CD14-positive monocyte (primary cell): ENCODE measurements at regions of chr1 and their contacts with region 1.

Region 1: DNA sequence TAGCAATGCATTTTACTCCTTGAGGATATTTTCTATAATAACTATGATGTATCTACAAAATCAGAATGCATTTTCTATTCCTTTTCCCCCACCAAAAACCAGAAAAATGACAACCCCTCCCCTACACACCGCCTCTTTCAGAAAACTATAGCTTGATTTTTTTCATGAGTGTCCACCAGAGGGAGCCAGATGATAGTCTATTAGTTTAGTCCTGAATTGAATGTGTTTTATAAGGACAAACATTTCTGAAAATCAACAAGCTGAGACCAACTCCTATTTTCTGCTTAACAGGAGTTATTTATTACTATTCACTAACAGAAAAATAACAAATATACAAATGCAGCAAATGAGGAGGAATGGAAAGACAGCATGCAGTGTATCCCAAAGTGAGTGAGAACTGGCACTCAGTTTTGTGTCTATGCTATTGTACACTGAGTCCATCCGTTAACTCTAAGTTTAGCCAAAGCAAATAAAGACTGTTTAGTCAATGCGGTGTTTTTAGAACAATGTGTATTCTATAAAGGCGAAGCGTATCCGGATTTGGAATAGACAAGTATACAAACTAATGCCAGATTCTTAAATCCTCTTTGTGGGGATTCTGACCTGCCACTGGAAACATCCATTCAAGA is 182.6 kb downstream of the VAV3 start:
- DNase-seq: peak; percentile 42 to 67 (median 53)
- H3K4me3 ChIP-seq: no peak overlapping the region
- H3K4me3 Mint-ChIP-seq: no peak overlapping the region
- H3K27ac ChIP-seq: no peak overlapping the region
- H3K27ac Mint-ChIP-seq: no peak overlapping the region
- H3K4me1 ChIP-seq: peaks cover 22 to 23% of the 10 kb centered on the region in 2 donors
- H3K4me1 Mint-ChIP-seq: peaks cover 27% of the 10 kb centered on the region
- H3K27me3 ChIP-seq: no peaks in the 10 kb centered on the region
- H3K27me3 Mint-ChIP-seq: peaks cover 0 to 1% (median 0%) of the 10 kb centered on the region in 3 donors
- CTCF ChIP-seq: peak; percentile 85

Region 2: DNA sequence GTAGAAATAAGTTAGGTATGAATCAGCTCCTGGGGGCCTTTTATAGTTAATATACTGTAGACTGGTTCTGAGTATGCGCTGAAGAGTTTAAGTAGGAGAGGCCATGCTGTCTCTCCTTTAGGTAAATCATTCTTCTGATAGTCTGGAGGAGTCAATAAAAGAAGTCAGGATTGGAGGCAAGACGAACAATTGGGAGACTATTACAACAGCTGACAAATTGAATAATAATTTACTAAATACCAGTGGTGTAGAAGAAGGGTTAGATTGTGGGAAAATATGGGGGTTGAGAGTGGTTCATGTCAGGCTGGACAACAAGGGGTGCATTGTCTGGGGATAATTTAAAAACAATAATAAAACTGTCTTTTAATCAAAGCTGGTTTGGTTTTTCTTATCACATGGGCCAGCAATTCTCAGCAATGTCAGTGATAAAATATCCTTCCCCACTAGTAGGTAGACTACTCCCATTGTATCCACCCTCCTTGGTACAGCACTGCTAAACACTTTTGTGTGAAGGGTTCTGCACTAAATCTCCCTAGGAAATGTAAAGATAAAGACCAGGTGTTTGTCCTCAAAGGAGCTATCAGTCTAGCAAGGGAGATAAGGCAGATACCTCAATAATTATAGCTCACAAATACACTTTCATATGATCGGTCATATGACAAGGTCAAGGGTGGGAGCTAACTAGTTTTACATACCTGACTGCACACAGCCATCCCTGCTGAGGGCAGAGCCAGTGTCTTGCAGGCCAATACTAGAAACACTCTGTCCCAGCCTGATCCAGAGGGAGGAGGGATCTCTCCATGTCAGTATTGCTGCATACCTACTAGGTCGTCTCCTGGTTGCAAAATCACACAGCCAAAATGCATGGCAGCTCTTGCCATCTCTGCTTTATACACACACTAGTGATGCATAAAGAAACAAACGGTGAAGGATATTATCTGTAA is 117.1 kb before region 1 on chr1:
- intact Hi-C with region 1: no loop called
- DNase-seq: no peak
- H3K4me3 ChIP-seq: no peak overlapping the region
- H3K4me3 Mint-ChIP-seq: no peak overlapping the region
- H3K27ac ChIP-seq: no peak overlapping the region
- H3K27ac Mint-ChIP-seq: no peak overlapping the region
- H3K4me1 ChIP-seq: no peaks in the 10 kb centered on the region
- H3K4me1 Mint-ChIP-seq: no peaks in the 10 kb centered on the region
- H3K27me3 ChIP-seq: no peaks in the 10 kb centered on the region
- H3K27me3 Mint-ChIP-seq: no peaks in the 10 kb centered on the region
- CTCF ChIP-seq: no peak

Region 3: DNA sequence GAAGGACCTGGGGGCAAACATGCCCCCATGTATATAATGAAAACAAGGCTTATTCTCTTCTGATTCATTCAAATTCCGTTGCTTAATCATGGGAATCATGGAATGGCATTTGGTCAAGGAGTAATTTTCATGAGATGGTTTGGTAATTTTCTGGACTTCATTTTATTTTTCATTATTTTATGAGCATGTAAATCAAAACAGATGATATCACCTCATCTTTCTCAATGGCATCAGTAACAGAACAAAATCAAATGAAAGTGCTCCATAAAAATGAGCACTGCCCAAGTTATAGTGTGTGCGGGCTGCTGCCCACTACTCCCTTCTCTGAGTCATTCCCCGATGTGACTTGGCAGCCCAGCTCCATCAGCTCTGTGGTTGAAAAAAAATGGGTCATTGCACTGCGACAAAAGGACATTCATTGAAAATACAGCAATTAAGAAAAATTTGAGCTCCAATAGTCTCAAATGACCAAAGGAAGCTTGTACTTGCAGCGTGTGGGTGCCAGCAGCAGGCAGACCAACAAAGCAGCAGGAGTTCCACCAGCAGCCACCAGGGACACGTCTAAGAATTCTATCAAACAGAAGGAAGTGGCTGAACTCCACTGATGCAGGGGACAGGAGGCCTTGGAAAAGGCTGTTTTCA is 267.0 kb after region 1 on chr1:
- intact Hi-C with region 1: loop called in 1 of 2 experiments (anchors 10 kb)
- DNase-seq: peak; percentile 59 to 77 (median 66)
- H3K4me3 ChIP-seq: peak overlapping the region in 1 of 3 experiments; percentile 70
- H3K4me3 Mint-ChIP-seq: no peak overlapping the region
- H3K27ac ChIP-seq: peak overlapping the region; percentile 86 to 91
- H3K27ac Mint-ChIP-seq: peak overlapping the region in 1 of 7 donors; percentile 15
- H3K4me1 ChIP-seq: peaks cover 66 to 70% of the 10 kb centered on the region in 2 donors
- H3K4me1 Mint-ChIP-seq: peaks cover 54% of the 10 kb centered on the region
- H3K27me3 ChIP-seq: no peaks in the 10 kb centered on the region
- H3K27me3 Mint-ChIP-seq: peaks cover 0 to 2% (median 2%) of the 10 kb centered on the region in 3 donors
- CTCF ChIP-seq: peak; percentile 67

Region 4: DNA sequence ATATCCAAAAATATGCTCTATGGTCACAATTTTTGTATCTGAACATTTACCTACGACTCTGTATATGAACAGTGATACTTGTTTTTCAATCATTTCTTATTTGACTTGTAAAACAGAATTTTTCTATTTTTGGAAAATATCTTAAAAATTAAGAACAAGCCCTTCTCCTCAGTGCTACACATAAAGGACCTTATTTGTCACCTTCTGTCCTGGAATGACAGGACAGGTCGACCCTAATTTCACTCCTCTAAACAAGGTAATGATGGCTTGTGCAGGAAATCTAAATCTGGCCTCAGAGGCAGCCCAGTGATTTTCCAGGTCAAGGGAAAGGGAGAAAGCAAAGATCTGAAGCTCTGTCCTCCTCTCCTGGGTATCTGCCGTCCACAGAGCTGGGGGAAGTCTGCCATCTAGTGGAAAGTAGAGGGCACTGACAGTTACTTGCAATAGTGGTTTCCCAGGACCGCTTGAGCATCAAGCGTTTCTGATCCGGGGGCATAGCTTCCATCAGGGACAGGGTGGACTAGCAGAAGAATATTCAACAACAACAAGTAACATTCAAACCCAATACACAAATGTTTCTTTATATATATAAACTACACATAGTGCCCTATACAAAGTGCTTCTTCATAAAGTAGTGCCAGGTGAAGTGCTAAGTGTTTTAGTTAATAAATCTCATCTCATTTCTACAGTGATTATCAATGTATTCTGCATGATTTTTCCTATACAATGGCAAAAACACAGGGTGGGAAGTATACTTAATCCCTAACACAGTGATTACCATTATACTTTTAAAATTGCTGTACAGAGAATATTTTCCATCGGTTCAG is 343.2 kb after region 1 on chr1:
- intact Hi-C with region 1: loop called (anchors 2 kb)
- DNase-seq: peak; percentile 63 to 75 (median 65)
- H3K4me3 ChIP-seq: no peak overlapping the region
- H3K4me3 Mint-ChIP-seq: no peak overlapping the region
- H3K27ac ChIP-seq: no peak overlapping the region
- H3K27ac Mint-ChIP-seq: peak overlapping the region in 2 of 7 donors; percentile 15 to 71
- H3K4me1 ChIP-seq: peaks cover 9 to 14% of the 10 kb centered on the region in 2 donors
- H3K4me1 Mint-ChIP-seq: peaks cover 22% of the 10 kb centered on the region
- H3K27me3 ChIP-seq: no peaks in the 10 kb centered on the region
- H3K27me3 Mint-ChIP-seq: peaks cover 0 to 2% (median 0%) of the 10 kb centered on the region in 3 donors
- CTCF ChIP-seq: peak; percentile 89